IMR-90 (cell line): ENCODE measurements at regions of chr7 and their contacts with region 1.

Region 1: GRCh38 chr7:786472-787255 is 45.6 kb upstream of the SUN1 start:
- DNase-seq: peak; percentile 51
- ATAC-seq: peak; percentile 100
- H3K4me3 ChIP-seq: no peak overlapping the region
- H3K27ac ChIP-seq: peak overlapping the region; percentile 16; the same call in 1 of the 2 replicates
- H3K4me1 ChIP-seq: no peaks in the 10 kb centered on the region
- H3K27me3 ChIP-seq: no peaks in the 10 kb centered on the region
- CTCF ChIP-seq: peak; percentile 86
- POLR2A ChIP-seq: no peak
- RAD21 ChIP-seq: peak; percentile 85

Region 2: DNA sequence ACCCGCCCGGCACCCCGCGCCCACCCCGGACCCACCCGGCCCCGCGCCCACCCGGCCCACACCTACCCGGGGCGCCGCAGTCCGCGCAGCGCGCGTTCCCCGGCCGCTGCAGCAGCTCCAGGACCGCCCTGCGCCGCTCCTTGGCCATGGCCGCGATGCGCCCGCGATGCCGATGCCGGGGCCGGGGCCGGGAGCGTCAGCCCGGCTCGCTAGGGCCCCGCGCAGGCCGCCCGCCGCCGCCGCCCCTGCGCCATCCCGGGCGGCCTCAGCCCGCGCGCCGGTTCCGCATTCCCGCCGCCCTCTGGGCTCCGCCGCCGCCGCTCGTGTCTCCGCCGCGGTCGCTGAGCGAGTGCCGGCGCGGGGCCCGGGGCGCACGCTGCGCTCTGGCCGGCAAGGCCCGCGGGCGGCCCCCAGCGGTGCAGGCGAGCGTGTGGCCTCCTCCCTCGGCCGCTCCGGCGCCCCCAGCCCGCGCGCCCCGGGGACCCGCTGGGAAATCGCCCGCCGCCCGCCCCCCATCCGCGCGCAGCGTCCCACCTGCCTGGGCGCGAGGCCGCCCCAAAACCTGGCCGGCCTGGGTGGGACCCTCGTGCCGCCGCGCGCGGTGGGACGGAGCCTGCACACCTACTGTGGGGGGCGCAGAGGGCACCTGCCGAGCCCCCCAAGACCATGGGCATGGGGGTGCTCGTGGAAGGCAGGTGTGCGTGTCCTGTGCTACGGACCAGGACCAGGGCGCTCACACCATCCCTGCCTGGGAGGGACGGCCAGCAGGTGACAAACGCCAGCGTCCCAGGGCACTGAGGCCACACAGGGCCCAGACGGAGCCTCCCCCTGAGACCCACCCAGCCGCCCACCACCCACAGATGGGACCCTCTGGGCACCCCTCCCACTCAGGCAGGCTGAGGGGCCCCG is 167.9 kb after region 1 on chr7 and contains the start of gene ADAP1:
- CTCF ChIA-PET with region 1: no interaction called
- POLR2A ChIA-PET with region 1: no interaction called
- dilution Hi-C with region 1: no loop called
- in situ Hi-C with region 1: no loop called
- intact Hi-C with region 1: loop called (anchors 5 kb)
- DNase-seq: peak; percentile 47
- ATAC-seq: peak; percentile 87
- H3K4me3 ChIP-seq: peak within 1 kb of the TSS; percentile 46
- H3K27ac ChIP-seq: no peak within 1 kb of the TSS
- H3K4me1 ChIP-seq: no peaks in the 10 kb centered on the region; the same call in 1 of the 2 replicates
- H3K27me3 ChIP-seq: peaks cover 18% of the 10 kb centered on the region; the same call in 1 of the 2 replicates
- CTCF ChIP-seq: peak; percentile 51
- POLR2A ChIP-seq: no peak
- RAD21 ChIP-seq: peak; percentile 64
- total RNA-seq, gene ADAP1: 1.4 and 2.2 TPM in 2 replicates

Region 3: GRCh38 chr7:1733206-1733907 is 946.7 kb after region 1 on chr7:
- CTCF ChIA-PET with region 1: no interaction called
- POLR2A ChIA-PET with region 1: no interaction called
- dilution Hi-C with region 1: no loop called
- in situ Hi-C with region 1: no loop called
- intact Hi-C with region 1: no loop called
- DNase-seq: no peak
- ATAC-seq: no peak
- H3K4me3 ChIP-seq: no peak overlapping the region
- H3K27ac ChIP-seq: no peak overlapping the region
- H3K4me1 ChIP-seq: no peaks in the 10 kb centered on the region
- H3K27me3 ChIP-seq: peaks cover 13% of the 10 kb centered on the region
- CTCF ChIP-seq: no peak
- POLR2A ChIP-seq: no peak
- RAD21 ChIP-seq: no peak